ENCODE measurements at regions of chr19 and their contacts with region 1.

Region 1: GRCh38 chr19:55670280-55671053 is 4.6 kb upstream of the EPN1 start:
- DNase-seq: no peak
- H3K4me3 ChIP-seq: no peak overlapping the region
- H3K27ac ChIP-seq: no peak overlapping the region
- H3K4me1 ChIP-seq: peaks cover 7 to 10% of the 10 kb centered on the region in 2 experiments; a peak in 2 of 4 replicates
- H3K27me3 ChIP-seq: no peaks in the 10 kb centered on the region
- CTCF ChIP-seq: no peak
- EP300 ChIP-seq: no peak
- RAD21 ChIP-seq: no peak

Region 2: DNA sequence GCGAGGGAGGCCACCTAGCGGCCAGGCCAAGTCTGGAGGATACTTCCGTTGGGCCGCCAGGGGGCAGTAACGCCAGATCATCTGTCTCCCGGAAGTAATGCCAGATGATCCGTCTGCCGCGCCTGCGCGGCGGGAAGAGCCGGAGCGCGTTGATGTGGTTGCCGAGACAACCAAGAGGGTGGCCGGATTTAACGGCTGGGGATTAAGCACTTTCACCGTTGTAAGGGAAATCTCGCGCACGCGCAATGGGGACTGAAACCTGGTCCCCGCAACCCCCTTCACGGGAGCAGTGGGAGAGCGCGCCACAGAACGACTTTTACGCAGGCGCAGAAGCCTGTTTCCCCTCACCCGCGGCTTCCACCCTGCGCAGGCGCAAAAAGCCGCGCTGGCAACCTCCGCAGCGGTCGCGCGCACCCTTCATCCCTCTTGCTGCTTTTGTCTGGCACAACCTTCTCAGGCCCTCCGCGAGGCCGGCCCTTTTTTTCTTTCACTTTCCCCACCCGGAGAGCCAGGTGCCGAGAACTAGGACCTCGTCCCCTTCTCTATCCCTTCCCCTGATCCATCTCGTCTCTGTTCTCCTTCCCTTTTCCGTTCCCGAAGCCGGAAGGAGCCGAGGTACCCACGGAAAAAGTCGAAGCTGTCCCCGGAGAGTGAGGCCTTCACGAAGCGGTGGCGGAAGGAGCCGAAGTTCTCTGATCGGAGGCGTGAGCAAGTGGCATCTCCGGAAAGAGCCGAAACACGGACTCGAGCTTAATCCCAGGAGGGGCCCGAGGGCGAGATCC is 16.5 kb before region 1 on chr19:
- CTCF ChIA-PET with region 1: interaction called, 34 read pairs
- POLR2A ChIA-PET with region 1: interaction called, 4 read pairs
- DNase-seq: peak; percentile 92
- H3K4me3 ChIP-seq: peak overlapping the region; percentile 92 to 96
- H3K27ac ChIP-seq: peak overlapping the region; percentile 99 to 100
- H3K4me1 ChIP-seq: peaks cover 14 to 33% of the 10 kb centered on the region in 2 experiments; a peak in 3 of 4 replicates
- H3K27me3 ChIP-seq: no peaks in the 10 kb centered on the region
- CTCF ChIP-seq: peak; percentile 99
- EP300 ChIP-seq: no peak
- RAD21 ChIP-seq: peak; percentile 61

Measured in SK-N-SH (cell line).